HepG2 (cell line): ENCODE measurements at regions of chrX and their contacts with region 1.

Region 1: DNA sequence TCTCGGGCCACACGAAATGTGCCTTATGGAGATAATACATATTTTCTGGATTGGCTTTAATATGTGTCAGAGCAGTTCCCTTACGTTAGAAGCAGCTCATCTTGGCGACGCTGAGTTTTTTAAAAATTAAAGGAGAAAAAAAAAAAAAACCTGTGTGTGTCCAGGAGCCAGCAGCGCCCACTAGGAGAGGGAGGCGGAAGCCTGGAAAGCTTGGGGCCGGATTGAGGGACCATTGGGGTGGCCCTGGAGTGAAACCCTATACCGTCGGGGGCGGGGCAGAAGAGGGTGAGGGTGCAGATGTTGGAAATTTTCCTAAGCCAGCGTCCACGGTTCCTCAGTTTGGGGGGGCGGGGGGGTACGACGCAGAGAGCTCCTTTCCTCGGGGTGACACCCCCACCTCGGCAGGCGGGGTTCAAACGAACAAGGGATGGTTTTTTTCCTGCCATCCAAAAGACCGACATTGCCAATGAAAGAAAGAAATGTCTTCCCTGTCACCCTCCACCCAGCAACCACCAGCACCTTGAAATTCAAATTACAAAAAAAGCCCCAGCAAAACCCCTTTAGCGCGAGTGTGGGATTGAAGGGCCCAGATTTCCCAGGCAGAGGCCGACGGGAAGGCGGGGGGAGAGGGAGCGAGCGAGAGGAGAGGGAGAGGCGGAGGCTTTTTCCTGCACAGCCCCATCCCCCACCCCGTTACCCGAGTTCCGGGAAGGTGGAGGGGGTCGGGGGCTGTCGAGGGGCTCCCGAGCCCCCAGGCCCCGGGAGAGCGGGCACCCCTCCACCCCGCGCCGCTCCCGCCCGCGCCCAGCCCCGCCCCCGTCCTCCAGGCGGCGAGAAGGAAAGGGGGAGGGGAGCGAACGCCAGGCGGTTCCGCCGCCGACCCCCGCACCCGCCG is 859 bp downstream of the SMARCA1 start:
- DNase-seq: peak; percentile 64
- ATAC-seq: peak; percentile 65
- H3K4me3 ChIP-seq: peak overlapping the region; percentile 76 to 94 (median 81)
- H3K27ac ChIP-seq: peak overlapping the region; percentile 99
- H3K4me1 ChIP-seq: peaks cover 44% of the 10 kb centered on the region
- H3K27me3 ChIP-seq: no peaks in the 10 kb centered on the region; a peak in 1 of 5 replicates
- CTCF ChIP-seq: no peak
- EP300 ChIP-seq: no peak
- POLR2A ChIP-seq: peak in 1 of 2 experiments; percentile 17; a peak in 1 of 4 replicates
- RAD21 ChIP-seq: no peak

Region 2: DNA sequence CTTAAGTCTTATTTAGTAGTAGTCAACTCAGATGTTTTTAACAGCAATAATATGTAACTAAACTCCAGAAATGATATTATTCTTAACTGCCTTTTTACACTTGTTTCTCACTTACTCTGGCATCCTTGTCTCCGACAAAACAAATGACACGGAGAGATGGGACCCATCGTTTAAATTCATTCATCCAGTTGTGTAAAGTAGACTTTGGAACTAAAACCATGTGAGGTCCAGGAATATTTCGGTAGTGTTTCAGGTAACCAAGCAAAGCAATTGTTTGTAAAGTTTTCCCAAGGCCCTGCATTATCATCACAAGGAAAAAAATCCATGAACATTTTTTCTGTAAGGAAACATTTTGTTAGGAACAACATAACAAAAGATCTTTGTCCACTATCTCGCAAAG is 10.7 kb before region 1 on chrX:
- CTCF ChIA-PET with region 1: no interaction called
- POLR2A ChIA-PET with region 1: interaction called, 5 read pairs
- in situ Hi-C with region 1: no loop called
- intact Hi-C with region 1: loop called (anchors 1 kb)
- DNase-seq: peak; percentile 86
- ATAC-seq: peak; percentile 67
- H3K4me3 ChIP-seq: no peak overlapping the region; a peak in 1 of 6 replicates
- H3K27ac ChIP-seq: peak overlapping the region; percentile 90
- H3K4me1 ChIP-seq: peaks cover 55% of the 10 kb centered on the region
- H3K27me3 ChIP-seq: no peaks in the 10 kb centered on the region
- CTCF ChIP-seq: no peak
- EP300 ChIP-seq: peak in 1 of 2 experiments; percentile 78; a peak in 2 of 4 replicates
- POLR2A ChIP-seq: peak in 1 of 2 experiments; percentile 58; a peak in 2 of 4 replicates
- RAD21 ChIP-seq: no peak

Region 3: GRCh38 chrX:129540068-129540653 is 17.7 kb after region 1 on chrX and contains the start of gene OCRL:
- CTCF ChIA-PET with region 1: no interaction called
- POLR2A ChIA-PET with region 1: interaction called, 6 read pairs
- in situ Hi-C with region 1: no loop called
- intact Hi-C with region 1: loop called (anchors 2 kb)
- DNase-seq: peak; percentile 51
- ATAC-seq: peak; percentile 94
- H3K4me3 ChIP-seq: peak within 1 kb of the TSS; percentile 72 to 75 (median 73)
- H3K27ac ChIP-seq: peak within 1 kb of the TSS; percentile 84
- H3K4me1 ChIP-seq: peaks cover 26% of the 10 kb centered on the region
- H3K27me3 ChIP-seq: no peaks in the 10 kb centered on the region
- CTCF ChIP-seq: peak; percentile 76
- EP300 ChIP-seq: no peak
- POLR2A ChIP-seq: peak in 1 of 2 experiments; percentile 29; a peak in 1 of 4 replicates
- RAD21 ChIP-seq: peak; percentile 44
- total RNA-seq, gene OCRL: 13.4 and 16.1 TPM in 2 replicates

Region 4: GRCh38 chrX:129585702-129586101 is 63.3 kb after region 1 on chrX:
- CTCF ChIA-PET with region 1: no interaction called
- POLR2A ChIA-PET with region 1: no interaction called
- in situ Hi-C with region 1: no loop called
- intact Hi-C with region 1: loop called (anchors 5 kb)
- DNase-seq: peak; percentile 83
- ATAC-seq: peak; percentile 95
- H3K4me3 ChIP-seq: peak overlapping the region in 1 of 3 experiments; percentile 2; a peak in 1 of 6 replicates
- H3K27ac ChIP-seq: peak overlapping the region; percentile 74
- H3K4me1 ChIP-seq: peaks cover 46% of the 10 kb centered on the region
- H3K27me3 ChIP-seq: no peaks in the 10 kb centered on the region
- CTCF ChIP-seq: no peak
- EP300 ChIP-seq: peak in 1 of 2 experiments; percentile 87; a peak in 2 of 4 replicates
- POLR2A ChIP-seq: no peak
- RAD21 ChIP-seq: no peak